Left cardiac atrium (tissue), 4 donors: ENCODE measurements at regions of chr5 and their contacts with region 1.

Region 1: DNA sequence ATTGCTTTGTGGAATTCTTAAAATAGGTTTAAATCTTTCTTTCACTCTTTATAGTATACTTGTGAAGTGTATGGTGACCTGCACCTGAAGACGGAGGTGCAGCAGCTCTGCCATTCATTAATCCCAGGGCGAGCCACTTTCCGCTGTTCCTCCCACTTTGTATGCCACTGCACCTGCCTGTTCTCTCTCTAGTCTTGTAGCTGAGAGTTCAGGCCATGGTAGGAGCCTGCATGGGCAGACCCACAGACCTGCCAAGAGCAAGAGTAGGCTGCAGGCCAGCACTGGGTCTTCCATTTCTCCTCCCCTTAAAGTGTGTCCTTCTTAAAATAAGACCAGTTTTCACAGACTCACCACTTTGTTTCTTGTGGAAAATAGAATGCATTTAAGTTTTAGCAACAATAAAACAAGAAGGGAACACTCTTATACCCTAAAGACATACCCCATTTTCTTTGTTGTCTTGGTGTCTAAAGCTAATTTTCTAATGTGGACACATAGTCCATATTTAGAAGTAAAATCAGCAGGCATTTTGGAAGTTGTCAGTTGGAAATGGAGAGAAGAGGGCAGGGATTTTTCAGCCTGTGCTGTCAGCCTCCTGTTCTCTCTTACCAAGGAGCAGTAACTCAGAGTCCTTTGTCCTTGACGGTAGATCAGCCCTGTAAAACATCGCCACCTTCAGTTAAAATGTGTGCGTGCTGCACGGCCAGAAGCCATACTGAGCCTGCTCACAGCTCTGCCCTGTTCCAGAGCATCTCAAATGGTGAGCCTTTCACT is 103.2 kb downstream of the SNCAIP start:
- DNase-seq: peak; percentile 46
- ATAC-seq: peak; percentile 93 to 97

Region 2: GRCh38 chr5:122192497-122193496 is 222.4 kb before region 1 on chr5:
- intact Hi-C with region 1: loop called (anchors 2 to 10 kb)
- DNase-seq: no peak
- ATAC-seq: peak; percentile 71 to 73

Region 3: DNA sequence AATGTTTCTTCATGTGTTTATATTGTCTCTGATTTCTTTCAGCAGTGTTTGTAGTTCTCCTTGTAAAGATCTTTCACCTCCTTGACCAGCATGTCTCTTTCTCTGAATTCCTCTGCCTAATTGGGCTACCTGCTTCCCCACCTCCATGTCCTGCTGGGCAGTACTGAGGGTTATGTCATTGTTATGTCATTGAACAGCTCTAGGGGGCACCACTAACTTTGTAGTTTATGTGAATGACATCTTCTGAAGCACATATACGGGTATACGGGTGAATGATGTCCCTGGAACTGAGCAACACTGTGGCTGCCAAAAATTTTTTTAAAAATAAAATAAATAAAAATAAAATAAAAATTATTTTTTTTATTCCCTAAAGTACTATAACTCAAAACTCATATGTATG is 120.1 kb before region 1 on chr5:
- intact Hi-C with region 1: loop called in 1 of 2 experiments (anchors 10 kb)
- DNase-seq: no peak
- ATAC-seq: peak in 1 of 2 donors; percentile 55